Activated CD4-positive, alpha-beta T cell treated with anti-CD3 and anti-CD28 coated beads for 36 hours (primary cell): ENCODE measurements at regions of chr12 and their contacts with region 1.

Region 1: DNA sequence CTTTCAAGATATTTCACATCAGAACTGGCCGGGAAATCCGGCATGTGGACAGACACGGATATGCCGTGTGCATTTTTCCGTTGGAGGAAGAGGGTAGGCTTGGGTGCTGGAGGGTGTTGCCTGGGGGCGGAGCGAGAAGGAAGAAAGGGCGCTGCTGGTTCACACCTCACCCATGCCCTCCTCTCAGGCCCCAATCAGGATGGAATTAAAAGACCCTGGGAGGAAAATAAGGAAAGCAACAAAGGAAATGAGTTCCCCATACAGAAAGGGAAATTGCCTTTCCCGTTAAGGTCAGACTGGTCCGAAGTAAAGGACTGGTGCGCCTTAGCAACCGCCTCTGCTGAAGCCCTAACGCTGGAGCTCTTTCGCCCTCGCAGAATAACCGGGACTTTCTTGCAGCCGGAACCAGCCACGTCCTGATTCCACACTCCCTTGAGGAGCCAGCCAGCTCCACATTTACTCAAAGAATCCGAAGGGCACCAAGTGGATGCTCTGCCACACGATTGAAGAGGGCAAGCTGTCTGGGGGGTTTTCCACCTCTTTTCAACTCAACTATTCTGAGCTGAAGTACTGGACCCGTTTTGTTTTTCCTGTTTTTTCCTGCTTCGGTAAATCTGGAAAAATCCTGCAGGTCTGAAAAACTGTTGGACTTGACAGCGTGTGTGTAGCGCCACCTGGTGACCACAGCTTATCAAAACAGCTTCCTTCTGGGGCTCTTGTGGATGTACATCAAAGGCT is 37.7 kb upstream of the BCL2L14 start:
- DNase-seq: peak; percentile 78
- ATAC-seq: peak; percentile 73
- H3K4me3 Mint-ChIP-seq: peak overlapping the region; percentile 60
- H3K27ac Mint-ChIP-seq: peak overlapping the region; percentile 91
- H3K4me1 Mint-ChIP-seq: peaks cover 46% of the 10 kb centered on the region
- H3K27me3 Mint-ChIP-seq: no peaks in the 10 kb centered on the region

Region 2: DNA sequence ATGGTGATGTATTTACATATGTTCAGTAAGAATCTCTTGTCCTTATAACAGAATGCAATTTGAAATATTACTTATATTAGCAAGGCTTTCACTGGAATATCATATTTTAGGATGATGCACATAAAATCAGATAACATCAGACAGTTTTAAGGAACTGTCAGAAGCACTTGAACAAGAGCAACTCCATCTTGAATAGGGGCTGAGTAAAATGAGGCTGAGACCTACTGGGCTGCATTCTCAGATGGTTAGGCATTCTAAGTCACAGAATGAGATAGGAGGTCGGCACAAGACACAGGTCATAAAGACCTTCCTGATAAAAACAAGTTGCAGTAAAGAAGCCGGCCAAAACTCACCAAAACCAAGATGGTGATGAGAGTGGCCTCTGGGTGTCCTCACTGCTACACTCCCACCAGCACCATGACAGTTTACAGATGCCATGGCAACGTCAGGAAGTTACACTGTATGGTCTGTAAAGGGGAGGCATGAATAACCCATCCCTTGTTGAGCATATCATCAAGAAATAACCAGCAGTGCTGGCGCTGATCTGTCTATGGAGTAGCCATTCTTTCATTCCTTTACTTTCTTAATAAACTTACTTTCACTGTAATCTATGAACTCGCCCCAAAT is 411.1 kb before region 1 on chr12:
- CTCF ChIA-PET with region 1: interaction called, 12 read pairs
- POLR2A ChIA-PET with region 1: no interaction called
- intact Hi-C with region 1: no loop called
- DNase-seq: peak; percentile 40
- ATAC-seq: peak; percentile 19
- H3K4me3 Mint-ChIP-seq: no peak overlapping the region
- H3K27ac Mint-ChIP-seq: no peak overlapping the region
- H3K4me1 Mint-ChIP-seq: peaks cover 9% of the 10 kb centered on the region
- H3K27me3 Mint-ChIP-seq: no peaks in the 10 kb centered on the region

Region 3: GRCh38 chr12:11771356-11771755 is 261.7 kb before region 1 on chr12:
- CTCF ChIA-PET with region 1: interaction called, 8 read pairs
- POLR2A ChIA-PET with region 1: no interaction called
- intact Hi-C with region 1: loop called (anchors 2 to 5 kb)
- DNase-seq: peak; percentile 48
- ATAC-seq: peak; percentile 45
- H3K4me3 Mint-ChIP-seq: no peak overlapping the region
- H3K27ac Mint-ChIP-seq: peak overlapping the region; percentile 79
- H3K4me1 Mint-ChIP-seq: peaks cover 94% of the 10 kb centered on the region
- H3K27me3 Mint-ChIP-seq: no peaks in the 10 kb centered on the region

Region 4: DNA sequence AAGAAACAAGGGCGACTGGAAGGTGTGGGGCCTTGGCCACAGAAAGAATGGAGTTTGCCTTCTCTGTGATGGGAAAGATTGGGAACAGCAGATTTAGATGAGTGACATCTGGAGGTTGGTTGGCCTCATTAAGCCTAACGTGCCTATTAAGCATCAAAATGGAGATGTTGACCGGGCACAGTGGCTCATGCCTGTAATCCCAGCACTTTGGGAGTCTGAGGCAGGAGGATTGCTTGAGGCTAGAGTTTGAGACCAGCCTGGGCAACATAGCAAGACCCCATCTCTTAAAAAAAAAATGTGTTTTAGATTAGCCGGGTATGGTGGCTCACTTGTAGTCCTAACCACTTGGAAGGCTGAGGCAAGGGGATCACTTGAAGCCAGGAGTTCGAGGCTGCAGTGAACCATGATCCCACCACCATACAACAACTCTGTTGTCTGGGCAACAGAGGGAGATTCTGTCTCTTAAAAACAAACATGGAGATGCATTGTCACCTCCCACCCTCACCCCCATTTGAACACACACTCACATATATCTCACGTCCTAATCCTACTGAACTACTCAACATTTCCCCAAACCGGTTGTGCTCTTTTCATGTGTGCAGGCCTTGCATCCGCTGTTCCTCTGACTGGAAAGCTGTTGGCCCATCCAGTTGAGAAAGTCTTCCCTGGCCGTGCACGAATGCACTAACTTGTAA is 211.5 kb before region 1 on chr12:
- CTCF ChIA-PET with region 1: interaction called, 10 read pairs
- POLR2A ChIA-PET with region 1: no interaction called
- intact Hi-C with region 1: no loop called
- DNase-seq: no peak
- ATAC-seq: no peak
- H3K4me3 Mint-ChIP-seq: peak overlapping the region; percentile 49
- H3K27ac Mint-ChIP-seq: peak overlapping the region; percentile 92
- H3K4me1 Mint-ChIP-seq: peaks cover 56% of the 10 kb centered on the region
- H3K27me3 Mint-ChIP-seq: no peaks in the 10 kb centered on the region

Region 5: DNA sequence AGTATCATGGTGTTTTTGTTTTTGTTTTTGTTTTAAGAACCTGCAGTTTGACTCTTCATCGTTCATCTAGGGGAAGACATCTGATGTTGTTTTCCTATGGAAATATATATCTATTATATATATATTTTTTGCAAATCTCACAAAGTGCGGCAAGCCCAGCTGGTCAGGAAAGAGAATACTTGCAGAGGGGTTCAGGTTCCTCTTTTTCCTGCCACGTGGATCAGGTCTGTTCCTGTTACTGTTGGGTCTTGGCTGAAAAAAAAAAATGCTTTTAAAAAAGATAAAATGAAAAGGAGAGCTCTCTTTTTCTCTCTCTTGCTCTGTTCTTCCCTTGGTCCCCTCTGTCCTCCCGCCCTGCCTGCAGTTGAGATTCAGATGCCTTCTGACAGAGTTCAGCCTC is 141.7 kb before region 1 on chr12:
- CTCF ChIA-PET with region 1: interaction called, 10 read pairs
- POLR2A ChIA-PET with region 1: interaction called, 4 read pairs
- intact Hi-C with region 1: no loop called
- DNase-seq: no peak
- ATAC-seq: no peak
- H3K4me3 Mint-ChIP-seq: no peak overlapping the region
- H3K27ac Mint-ChIP-seq: peak overlapping the region; percentile 35
- H3K4me1 Mint-ChIP-seq: peaks cover 30% of the 10 kb centered on the region
- H3K27me3 Mint-ChIP-seq: no peaks in the 10 kb centered on the region

Region 6: GRCh38 chr12:12064596-12064995 is 31.6 kb after region 1 on chr12:
- CTCF ChIA-PET with region 1: no interaction called
- POLR2A ChIA-PET with region 1: no interaction called
- intact Hi-C with region 1: no loop called
- DNase-seq: no peak
- ATAC-seq: no peak
- H3K4me3 Mint-ChIP-seq: no peak overlapping the region
- H3K27ac Mint-ChIP-seq: no peak overlapping the region
- H3K4me1 Mint-ChIP-seq: no peaks in the 10 kb centered on the region
- H3K27me3 Mint-ChIP-seq: no peaks in the 10 kb centered on the region

Region 7: DNA sequence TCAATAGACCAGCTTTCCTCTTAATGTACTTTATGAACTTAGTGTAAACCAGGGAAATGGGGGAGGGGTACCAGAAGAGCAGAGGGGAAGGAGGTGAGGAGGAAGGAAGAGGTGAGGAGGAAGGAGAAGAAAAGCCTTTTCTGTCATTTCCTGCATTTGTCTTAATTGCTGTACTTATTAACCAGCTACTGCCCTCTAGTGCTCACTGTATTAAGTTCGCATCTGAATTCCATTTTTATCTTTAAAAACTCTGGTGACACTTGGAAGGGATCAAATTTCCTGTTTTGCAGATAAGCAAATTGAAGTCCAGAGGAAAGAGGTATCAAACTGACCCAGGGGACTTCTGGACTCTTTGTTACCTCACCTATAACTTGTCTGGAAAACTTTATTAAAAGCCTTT is 294.8 kb after region 1 on chr12:
- CTCF ChIA-PET with region 1: interaction called, 13 read pairs
- POLR2A ChIA-PET with region 1: no interaction called
- intact Hi-C with region 1: loop called in 1 of 2 experiments (anchors 1 kb)
- DNase-seq: no peak
- ATAC-seq: peak; percentile 64
- H3K4me3 Mint-ChIP-seq: no peak overlapping the region
- H3K27ac Mint-ChIP-seq: peak overlapping the region; percentile 44
- H3K4me1 Mint-ChIP-seq: peaks cover 9% of the 10 kb centered on the region
- H3K27me3 Mint-ChIP-seq: no peaks in the 10 kb centered on the region